ENCODE measurements at regions of chr1 and their contacts with region 1.

Region 1: DNA sequence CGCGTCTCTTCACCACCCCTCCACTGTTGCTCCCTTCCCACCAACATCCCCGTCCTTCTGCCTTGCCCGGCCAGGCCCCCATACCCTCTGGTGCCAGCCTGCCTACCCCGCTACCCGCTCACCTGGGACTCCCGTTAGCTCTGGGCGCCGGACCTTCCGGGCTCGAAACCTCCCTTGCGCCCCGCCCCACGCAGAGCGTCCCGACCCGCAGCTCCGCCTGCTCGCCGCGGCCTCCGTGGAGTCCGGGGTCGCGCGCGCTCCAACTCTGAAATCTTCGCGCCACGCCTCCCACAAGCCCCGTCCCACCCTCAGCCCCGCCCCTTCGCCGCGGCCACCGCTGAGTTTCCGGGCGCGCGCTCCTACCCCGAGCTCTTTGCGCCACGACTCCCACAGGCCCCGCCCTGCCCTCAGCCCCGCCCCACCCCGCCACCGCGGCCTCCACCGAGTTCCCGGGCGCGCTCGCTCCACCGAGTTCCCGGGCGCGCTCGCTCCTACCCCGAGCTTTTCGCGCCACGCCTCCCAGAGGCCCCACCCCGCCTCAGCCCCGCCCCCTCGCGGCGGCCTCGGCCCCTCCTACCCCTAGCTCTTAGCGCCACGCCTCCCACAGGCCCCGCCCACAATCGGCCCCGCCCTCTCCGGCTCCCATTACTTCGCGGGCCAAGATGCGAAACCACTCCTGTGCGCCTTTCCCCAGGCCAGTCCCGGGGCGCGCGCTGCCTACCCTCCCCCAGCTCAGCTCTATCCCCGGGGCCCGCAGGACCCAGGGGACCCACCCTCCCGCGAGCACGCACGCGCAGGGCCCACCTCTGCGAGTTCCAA is at the start of gene IFT25:
- DNase-seq: peak; percentile 99
- H3K4me3 Mint-ChIP-seq: peak within 1 kb of the TSS; percentile 90
- H3K27ac Mint-ChIP-seq: peak within 1 kb of the TSS; percentile 87
- H3K4me1 Mint-ChIP-seq: peaks cover 45% of the 10 kb centered on the region
- H3K27me3 Mint-ChIP-seq: no peaks in the 10 kb centered on the region
- total RNA-seq, gene IFT25: 46.2 to 48.7 TPM

Region 2: GRCh38 chr1:53220171-53220961 is 725.3 kb before region 1 on chr1 and contains the start of gene CZIB:
- CTCF ChIA-PET with region 1: no interaction called
- intact Hi-C with region 1: loop called (anchors 5 kb)
- DNase-seq: peak; percentile 96
- H3K4me3 Mint-ChIP-seq: peak within 1 kb of the TSS; percentile 91
- H3K27ac Mint-ChIP-seq: peak within 1 kb of the TSS; percentile 95
- H3K4me1 Mint-ChIP-seq: peaks cover 24% of the 10 kb centered on the region
- H3K27me3 Mint-ChIP-seq: no peaks in the 10 kb centered on the region
- total RNA-seq, gene CZIB: 44.4 to 45.6 TPM

Region 3: DNA sequence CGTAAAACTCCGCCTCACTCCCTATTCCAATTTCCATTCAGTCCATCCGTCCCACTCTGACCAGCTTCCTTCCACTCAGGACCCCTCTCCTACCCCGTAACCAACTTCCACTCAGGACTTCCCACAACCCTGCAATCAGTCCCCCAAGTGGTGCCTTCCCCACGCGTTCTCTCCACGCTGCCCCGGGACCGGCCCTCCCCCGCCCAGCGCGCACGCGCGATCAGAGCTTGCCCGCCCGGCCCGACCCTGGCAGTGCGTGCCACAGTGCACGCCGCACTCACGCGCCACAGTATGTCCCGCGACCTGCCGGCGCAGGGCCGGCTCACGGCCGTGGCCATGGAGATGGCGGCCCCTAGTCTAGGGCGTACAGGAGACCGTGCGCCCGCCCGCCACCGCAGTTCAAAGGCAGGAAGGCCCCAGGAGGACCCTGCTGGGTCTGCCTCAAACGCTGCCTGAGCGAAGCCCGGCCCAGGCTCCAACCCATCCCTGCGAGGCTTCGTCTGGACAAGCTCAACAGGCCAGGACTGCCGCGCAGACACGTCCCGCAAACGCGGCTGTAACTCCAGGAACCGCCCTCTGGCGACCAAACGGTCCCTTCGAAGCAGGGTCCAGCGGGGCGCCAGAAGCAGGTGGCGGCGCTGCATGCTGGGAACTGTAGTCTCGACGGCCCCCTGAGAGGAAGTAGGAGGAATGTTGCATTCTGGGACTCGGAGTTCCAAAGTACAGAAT is 107.6 kb before region 1 on chr1 and contains the start of gene NDC1:
- CTCF ChIA-PET with region 1: interaction called, 3 read pairs
- intact Hi-C with region 1: loop called (anchors 1 kb)
- DNase-seq: peak; percentile 92
- H3K4me3 Mint-ChIP-seq: peak within 1 kb of the TSS; percentile 100
- H3K27ac Mint-ChIP-seq: peak within 1 kb of the TSS; percentile 96
- H3K4me1 Mint-ChIP-seq: peaks cover 27% of the 10 kb centered on the region
- H3K27me3 Mint-ChIP-seq: no peaks in the 10 kb centered on the region
- total RNA-seq, gene NDC1: 25.9 to 27.9 TPM

Region 4: DNA sequence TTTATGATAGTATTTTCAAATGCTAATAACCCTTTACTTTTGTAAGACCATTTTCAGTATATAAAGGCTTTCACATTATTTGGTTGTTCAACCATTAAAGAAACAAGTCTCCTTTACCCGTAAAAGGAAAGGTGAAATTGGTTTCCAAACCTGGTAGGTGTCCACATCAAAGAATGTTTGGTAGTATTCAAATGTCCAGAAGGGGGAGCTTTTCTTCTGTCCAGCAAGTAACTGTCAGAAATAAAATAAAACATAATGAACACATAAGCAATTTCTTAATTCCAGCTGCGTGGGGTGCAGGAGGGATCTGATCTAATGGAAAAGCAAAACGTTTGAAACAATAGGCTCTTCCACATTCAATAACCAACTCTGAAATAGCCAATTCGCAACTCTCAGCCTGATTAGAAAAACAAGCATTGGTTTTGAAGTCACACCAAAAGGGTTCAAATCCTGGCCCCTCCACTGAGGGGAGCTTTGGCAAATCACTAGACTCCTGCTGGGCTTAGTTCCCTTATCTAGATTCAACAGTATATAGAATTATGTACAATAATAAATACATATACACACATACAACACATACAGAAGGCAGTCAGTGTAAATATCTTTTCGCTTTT is 67.0 kb before region 1 on chr1:
- CTCF ChIA-PET with region 1: interaction called, 18 read pairs
- intact Hi-C with region 1: loop called (anchors 1 kb)
- DNase-seq: no peak
- H3K4me3 Mint-ChIP-seq: no peak overlapping the region
- H3K27ac Mint-ChIP-seq: no peak overlapping the region
- H3K4me1 Mint-ChIP-seq: peaks cover 3% of the 10 kb centered on the region
- H3K27me3 Mint-ChIP-seq: no peaks in the 10 kb centered on the region

Region 5: GRCh38 chr1:53919675-53920066 is 26.0 kb before region 1 on chr1:
- CTCF ChIA-PET with region 1: interaction called, 3 read pairs
- intact Hi-C with region 1: loop called (anchors 1 kb)
- DNase-seq: peak; percentile 38
- H3K4me3 Mint-ChIP-seq: no peak overlapping the region
- H3K27ac Mint-ChIP-seq: peak overlapping the region; percentile 14
- H3K4me1 Mint-ChIP-seq: peaks cover 37% of the 10 kb centered on the region
- H3K27me3 Mint-ChIP-seq: no peaks in the 10 kb centered on the region

Region 6: GRCh38 chr1:54052934-54053744 is 107.5 kb after region 1 on chr1 and contains the starts of genes TCEANC2 and TMEM59:
- CTCF ChIA-PET with region 1: interaction called, 3 read pairs
- intact Hi-C with region 1: loop called (anchors 1 kb)
- DNase-seq: peak; percentile 99
- H3K4me3 Mint-ChIP-seq: no peak within 1 kb of the TSS
- H3K27ac Mint-ChIP-seq: no peak within 1 kb of the TSS
- H3K4me1 Mint-ChIP-seq: peaks cover 37% of the 10 kb centered on the region
- H3K27me3 Mint-ChIP-seq: no peaks in the 10 kb centered on the region
- total RNA-seq, gene TCEANC2: 13.0 TPM
- total RNA-seq, gene TMEM59: 140 to 142 TPM

Region 7: GRCh38 chr1:54153548-54154439 is 208.2 kb after region 1 on chr1:
- CTCF ChIA-PET with region 1: no interaction called
- intact Hi-C with region 1: no loop called
- DNase-seq: no peak
- H3K4me3 Mint-ChIP-seq: no peak overlapping the region
- H3K27ac Mint-ChIP-seq: no peak overlapping the region
- H3K4me1 Mint-ChIP-seq: no peaks in the 10 kb centered on the region
- H3K27me3 Mint-ChIP-seq: no peaks in the 10 kb centered on the region

Region 8: DNA sequence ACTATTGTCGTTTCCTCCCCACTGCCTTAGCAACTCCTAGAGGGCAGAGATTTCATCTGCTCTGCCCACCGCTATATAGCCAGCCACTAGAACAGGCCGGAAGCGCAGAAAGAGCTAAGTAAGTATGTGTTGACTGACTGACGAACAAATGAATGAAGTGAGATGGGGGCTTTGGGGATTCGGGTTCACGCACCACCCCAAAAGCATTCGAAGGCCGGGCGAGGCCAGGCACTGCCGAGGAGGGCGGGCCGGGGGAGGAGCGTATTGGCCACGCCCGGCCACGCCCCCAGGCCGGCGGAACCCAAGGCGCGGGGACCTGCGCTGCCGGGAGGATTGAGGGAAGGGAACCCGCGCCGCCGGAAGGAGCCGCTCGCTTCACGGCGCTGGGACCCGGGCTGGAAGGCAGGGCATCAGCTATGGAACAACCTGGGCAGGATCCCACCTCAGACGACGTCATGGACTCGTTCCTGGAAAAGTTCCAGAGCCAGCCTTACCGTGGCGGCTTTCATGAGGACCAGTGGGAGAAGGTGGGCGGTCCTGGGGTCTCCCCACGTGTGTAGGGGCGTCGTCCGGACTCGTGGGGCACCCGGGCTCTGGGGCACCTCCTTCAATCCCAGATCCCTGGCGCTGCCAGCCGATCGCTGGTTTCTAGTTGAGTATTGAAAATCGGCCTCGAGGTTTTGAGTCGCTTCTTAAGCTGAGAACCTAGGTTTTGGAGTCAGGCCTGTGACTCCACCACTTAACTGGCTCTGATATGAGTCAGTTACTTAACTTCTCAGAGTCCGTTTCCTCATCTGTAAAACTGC is 770.1 kb after region 1 on chr1 and contains the start of gene TTC4:
- CTCF ChIA-PET with region 1: no interaction called
- intact Hi-C with region 1: loop called (anchors 5 kb)
- DNase-seq: peak; percentile 84
- H3K4me3 Mint-ChIP-seq: peak within 1 kb of the TSS; percentile 92
- H3K27ac Mint-ChIP-seq: peak within 1 kb of the TSS; percentile 92
- H3K4me1 Mint-ChIP-seq: peaks cover 31% of the 10 kb centered on the region
- H3K27me3 Mint-ChIP-seq: no peaks in the 10 kb centered on the region
- total RNA-seq, gene TTC4: 26.3 to 30.2 TPM